ENCODE measurements at regions of chr18 and their contacts with region 1.

Region 1: DNA sequence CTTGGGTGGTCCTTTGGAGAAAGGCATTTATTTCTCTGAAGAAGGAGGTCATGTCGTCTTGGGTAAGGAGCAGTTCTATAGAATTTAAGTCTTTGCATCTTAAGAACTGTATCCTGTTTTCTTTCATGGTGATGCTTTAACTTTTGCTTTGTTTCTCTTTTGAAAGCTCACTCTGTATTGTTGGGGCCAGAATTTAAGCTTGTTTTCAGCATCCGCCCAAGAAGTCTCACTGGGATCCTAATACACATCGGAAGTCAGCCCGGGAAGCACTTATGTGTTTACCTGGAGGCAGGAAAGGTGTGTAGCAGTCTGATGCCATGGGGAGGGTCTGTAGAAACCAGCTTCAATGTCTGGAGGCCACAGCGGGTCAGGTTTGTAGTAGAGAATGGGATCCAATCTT is 64.7 kb upstream of the TTC39C start:
- DNase-seq: no peak
- ATAC-seq: no peak
- H3K4me3 ChIP-seq: no peak overlapping the region
- H3K27ac ChIP-seq: no peak overlapping the region
- H3K4me1 ChIP-seq: no peaks in the 10 kb centered on the region
- H3K27me3 ChIP-seq: no peaks in the 10 kb centered on the region
- CTCF ChIP-seq: no peak

Region 2: DNA sequence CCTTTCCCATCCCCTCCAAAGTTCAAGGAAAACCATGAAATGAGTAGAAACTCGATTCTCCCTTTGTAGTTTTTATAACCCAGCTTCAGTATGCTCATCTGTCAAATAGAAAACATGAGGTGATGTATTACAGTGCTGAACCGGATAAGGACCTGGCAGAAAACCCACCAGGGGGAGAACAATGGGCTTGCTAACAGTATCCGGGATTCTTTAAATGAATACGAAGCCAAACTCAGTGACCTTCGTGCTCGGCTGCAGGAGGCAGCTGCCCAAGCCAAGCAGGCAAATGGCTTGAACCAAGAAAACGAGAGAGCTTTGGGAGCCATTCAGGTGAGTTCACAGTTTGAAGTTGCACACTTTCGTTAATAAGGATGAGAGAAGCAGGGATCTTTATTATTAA is 48.9 kb before region 1 on chr18:
- intact Hi-C with region 1: loop called in 1 of 10 experiments (anchors 5 kb)
- DNase-seq: peak in 1 of 2 donors; percentile 21
- ATAC-seq: peak in 7 of 8 donors; percentile 29 to 63 (median 51)
- H3K4me3 ChIP-seq: no peak overlapping the region
- H3K27ac ChIP-seq: no peak overlapping the region
- H3K4me1 ChIP-seq: peaks cover 0 to 10% (median 0%) of the 10 kb centered on the region in 9 donors
- H3K27me3 ChIP-seq: no peaks in the 10 kb centered on the region
- CTCF ChIP-seq: no peak